ENCODE measurements at regions of chr12 and their contacts with region 1.

Region 1: GRCh38 chr12:92796650-92797049 is 93.9 kb downstream of the PLEKHG7 start:
- DNase-seq: no peak
- ATAC-seq: no peak
- H3K4me3 Mint-ChIP-seq: no peak overlapping the region
- H3K27ac Mint-ChIP-seq: no peak overlapping the region
- H3K4me1 Mint-ChIP-seq: no peaks in the 10 kb centered on the region
- H3K27me3 Mint-ChIP-seq: no peaks in the 10 kb centered on the region

Region 2: DNA sequence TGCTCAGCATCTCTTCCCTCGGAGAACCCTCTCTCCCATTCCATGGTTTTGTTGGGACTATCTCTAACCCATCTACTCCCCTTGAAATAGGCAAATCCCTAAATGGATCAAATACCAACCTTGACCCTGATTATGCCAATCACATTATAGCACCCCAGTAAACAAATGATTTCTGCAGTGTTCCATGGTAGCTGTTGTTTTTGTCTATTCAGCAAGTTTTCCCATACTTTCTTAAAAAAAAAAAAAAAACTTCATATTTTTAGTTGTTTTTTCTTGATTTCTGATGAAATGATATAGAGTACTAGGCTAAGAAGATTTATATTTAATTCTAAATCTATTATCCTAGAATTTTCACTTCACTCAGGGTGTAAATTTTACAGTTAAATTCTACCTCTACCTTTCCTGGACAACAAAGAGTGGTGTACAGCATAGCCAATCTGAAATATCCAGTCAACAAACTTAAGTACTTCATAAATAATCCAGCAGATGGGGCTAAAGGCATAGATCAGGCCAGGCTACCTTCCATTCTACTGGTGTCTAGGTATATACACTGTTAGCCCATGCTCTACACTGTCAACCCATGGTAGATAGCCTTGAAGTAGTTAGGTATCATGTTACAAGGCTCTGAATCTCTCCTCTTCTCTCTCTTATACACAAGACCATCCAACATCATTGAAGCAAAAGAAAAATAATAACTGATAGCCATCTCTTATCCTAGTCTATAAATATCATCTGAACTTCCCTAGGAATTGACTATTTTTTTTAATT is 11.7 kb before region 1 on chr12:
- CTCF ChIA-PET with region 1: interaction called, 11 read pairs
- POLR2A ChIA-PET with region 1: interaction called, 3 read pairs
- DNase-seq: peak; percentile 44
- ATAC-seq: peak; percentile 97
- H3K4me3 Mint-ChIP-seq: no peak overlapping the region
- H3K27ac Mint-ChIP-seq: no peak overlapping the region
- H3K4me1 Mint-ChIP-seq: peaks cover 17% of the 10 kb centered on the region
- H3K27me3 Mint-ChIP-seq: no peaks in the 10 kb centered on the region

Measured in activated CD8-positive, alpha-beta T cell treated with anti-CD3 and anti-CD28 coated beads, Interleukin-2, amount 10 ng/mL, durations not matched to agents 7 days and 5 days (primary cell).